ENCODE measurements at regions of chr12 and their contacts with region 1.

Region 1: DNA sequence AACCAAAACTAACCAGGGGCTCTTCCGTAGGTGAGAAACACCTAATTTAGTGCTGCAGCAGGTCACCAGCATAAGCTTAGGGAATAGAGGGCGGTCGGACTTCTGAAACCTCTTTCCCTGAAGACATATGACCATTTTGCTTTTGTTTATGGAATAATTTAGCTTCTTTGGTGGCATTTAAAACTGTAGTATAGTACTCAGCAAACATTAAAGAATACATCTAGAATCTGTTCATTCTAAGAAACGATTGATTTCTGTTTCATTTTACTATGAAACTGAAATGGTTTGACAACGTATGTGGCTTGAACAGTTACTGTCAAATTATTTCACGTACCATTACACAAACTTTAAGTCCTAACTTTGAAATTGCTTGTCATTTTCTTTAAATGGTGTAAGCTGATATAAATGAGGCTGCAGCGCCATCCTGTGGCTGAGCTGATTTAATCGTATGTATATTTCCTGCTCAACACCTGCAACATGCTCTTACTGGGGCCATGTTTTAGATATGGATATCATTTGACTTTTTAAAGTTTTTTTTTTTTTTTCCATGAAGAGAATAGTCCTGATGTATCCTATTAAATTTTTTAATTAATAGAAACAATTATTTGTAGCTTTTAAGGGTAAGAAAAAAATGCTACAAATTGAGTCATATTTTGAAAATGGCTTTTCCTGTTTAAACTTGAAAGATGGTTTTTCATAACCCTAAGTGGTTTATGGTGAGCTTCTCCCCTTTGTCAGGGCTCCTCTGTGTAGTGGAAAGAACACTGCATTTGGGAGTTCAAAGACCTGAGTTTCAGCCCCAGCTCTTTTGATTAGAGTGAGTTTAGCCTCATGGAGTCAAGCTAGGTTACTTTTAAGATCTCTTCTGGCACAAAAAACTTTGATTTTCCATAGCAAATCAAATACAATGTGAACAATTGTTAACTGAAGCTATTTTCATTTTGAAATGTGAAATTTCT is 27.4 kb downstream of the CFAP54 start:
- DNase-seq: peak; percentile 85
- H3K4me3 ChIP-seq: no peak overlapping the region
- H3K27ac ChIP-seq: no peak overlapping the region
- H3K4me1 ChIP-seq: peaks cover 14% of the 10 kb centered on the region
- CTCF ChIP-seq: peak; percentile 93

Region 2: GRCh38 chr12:95918194-95918993 is 598.4 kb before region 1 on chr12:
- CTCF ChIA-PET with region 1: no interaction called
- POLR2A ChIA-PET with region 1: no interaction called
- intact Hi-C with region 1: loop called (anchors 1 kb)
- DNase-seq: peak; percentile 75
- H3K4me3 ChIP-seq: no peak overlapping the region
- H3K27ac ChIP-seq: no peak overlapping the region
- H3K4me1 ChIP-seq: peaks cover 4% of the 10 kb centered on the region
- CTCF ChIP-seq: peak; percentile 93

Region 3: GRCh38 chr12:95986635-95987570 is 529.8 kb before region 1 on chr12:
- CTCF ChIA-PET with region 1: no interaction called
- POLR2A ChIA-PET with region 1: no interaction called
- intact Hi-C with region 1: no loop called
- DNase-seq: no peak
- H3K4me3 ChIP-seq: no peak overlapping the region
- H3K27ac ChIP-seq: no peak overlapping the region
- H3K4me1 ChIP-seq: no peaks in the 10 kb centered on the region
- CTCF ChIP-seq: no peak

Region 4: GRCh38 chr12:96061864-96062453 is 454.8 kb before region 1 on chr12:
- CTCF ChIA-PET with region 1: interaction called, 4 read pairs
- POLR2A ChIA-PET with region 1: interaction called, 4 read pairs
- intact Hi-C with region 1: loop called (anchors 1 kb)
- DNase-seq: peak; percentile 87
- H3K4me3 ChIP-seq: no peak overlapping the region
- H3K27ac ChIP-seq: no peak overlapping the region
- H3K4me1 ChIP-seq: peaks cover 6% of the 10 kb centered on the region
- CTCF ChIP-seq: peak; percentile 91

Region 5: DNA sequence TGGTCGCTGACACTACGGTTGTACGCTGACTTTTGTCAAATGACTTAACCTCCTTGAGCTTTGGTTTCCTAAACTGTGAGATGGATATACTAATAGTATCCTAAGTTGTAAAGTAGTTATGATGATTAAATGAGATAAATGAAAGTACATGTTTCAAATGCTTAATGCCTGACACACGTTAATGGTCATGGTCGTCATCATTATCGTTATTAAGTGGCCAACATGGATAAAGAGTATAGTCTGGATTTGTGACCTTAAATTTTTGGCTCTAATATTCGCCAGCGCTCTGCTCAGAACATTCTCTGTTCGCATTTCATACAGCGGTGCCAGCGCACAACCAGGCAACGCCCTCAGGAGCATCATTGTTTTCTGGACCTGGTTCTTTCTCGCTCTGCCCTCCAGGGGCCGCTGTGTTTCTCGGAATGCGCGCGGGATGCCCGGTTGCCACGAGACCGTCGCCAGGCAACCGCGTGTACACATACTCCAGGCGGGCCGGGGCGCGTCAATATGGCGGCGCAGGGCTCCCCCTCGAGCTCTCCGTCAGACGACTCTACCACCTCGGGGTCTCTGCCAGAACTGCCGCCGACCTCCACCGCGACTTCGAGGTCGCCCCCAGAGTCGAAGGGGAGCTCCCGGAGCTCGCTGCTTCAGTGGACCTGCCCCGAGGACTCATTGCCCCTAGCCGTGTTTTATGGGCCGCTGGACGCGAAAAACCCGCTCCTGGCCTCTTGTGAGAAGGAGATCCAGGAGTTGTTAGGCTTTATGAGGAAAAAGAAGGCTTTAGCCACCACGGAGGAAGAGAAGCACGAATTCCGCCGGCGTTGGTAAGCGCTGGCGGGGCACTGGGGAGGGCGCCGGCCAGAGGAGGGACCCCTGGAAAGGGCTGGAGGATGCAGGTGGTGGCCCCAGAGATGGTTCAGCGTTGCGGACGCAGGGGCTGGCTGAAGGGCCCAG is 27.4 kb before region 1 on chr12 and contains the start of gene CFAP54:
- CTCF ChIA-PET with region 1: interaction called, 3 read pairs
- POLR2A ChIA-PET with region 1: interaction called, 3 read pairs
- intact Hi-C with region 1: loop called (anchors 1 kb)
- DNase-seq: peak; percentile 91
- H3K4me3 ChIP-seq: peak within 1 kb of the TSS; percentile 70
- H3K27ac ChIP-seq: no peak within 1 kb of the TSS
- H3K4me1 ChIP-seq: peaks cover 17% of the 10 kb centered on the region
- CTCF ChIP-seq: peak; percentile 90
- total RNA-seq, gene CFAP54: not detected in 2 replicates

Region 6: DNA sequence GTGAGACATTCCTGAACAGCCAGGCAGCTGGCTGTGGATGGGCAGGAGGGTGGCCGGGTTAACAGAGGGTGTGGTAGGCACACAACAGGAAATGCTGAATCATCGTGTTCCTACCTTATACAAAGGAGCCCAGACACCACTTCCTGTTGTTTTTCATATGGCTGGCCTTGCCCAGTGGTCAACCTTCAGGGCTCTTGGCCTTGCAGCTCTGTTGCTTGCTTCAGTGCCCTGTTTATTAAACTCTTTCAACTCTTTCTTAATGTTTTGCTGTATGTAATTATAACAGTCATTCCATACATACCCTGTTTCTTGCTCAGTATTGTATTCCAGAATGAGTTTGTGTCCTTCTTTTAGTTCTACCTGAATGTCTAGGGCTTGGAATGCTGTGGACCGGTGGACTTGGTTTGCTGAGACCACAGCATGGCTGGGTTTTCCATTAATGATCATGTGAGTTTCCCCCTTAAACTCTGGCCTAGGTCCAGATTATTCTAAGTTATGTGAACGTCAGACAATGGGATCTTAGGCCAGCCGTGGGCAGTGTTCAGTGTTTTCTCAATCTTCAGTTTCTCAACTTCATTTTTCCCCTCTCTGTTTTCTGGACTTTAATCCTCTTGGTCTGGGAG is 15.5 kb before region 1 on chr12:
- CTCF ChIA-PET with region 1: no interaction called
- POLR2A ChIA-PET with region 1: interaction called, 10 read pairs
- intact Hi-C with region 1: no loop called
- DNase-seq: peak; percentile 66
- H3K4me3 ChIP-seq: peak overlapping the region; percentile 5
- H3K27ac ChIP-seq: peak overlapping the region; percentile 17
- H3K4me1 ChIP-seq: peaks cover 26% of the 10 kb centered on the region
- CTCF ChIP-seq: no peak

Measured in OCI-LY7 (cell line).